Caco-2 (cell line): ENCODE measurements at regions of chr7 and their contacts with region 1.

Region 1: GRCh38 chr7:18829858-18830285 is 287.6 kb downstream of the TWIST1 start:
- DNase-seq: no peak
- H3K4me3 ChIP-seq: no peak overlapping the region
- H3K4me3 Mint-ChIP-seq: no peak overlapping the region
- H3K27ac Mint-ChIP-seq: no peak overlapping the region
- H3K4me1 ChIP-seq: no peaks in the 10 kb centered on the region
- H3K4me1 Mint-ChIP-seq: no peaks in the 10 kb centered on the region
- H3K27me3 ChIP-seq: no peaks in the 10 kb centered on the region
- H3K27me3 Mint-ChIP-seq: no peaks in the 10 kb centered on the region
- CTCF ChIP-seq: no peak

Region 2: DNA sequence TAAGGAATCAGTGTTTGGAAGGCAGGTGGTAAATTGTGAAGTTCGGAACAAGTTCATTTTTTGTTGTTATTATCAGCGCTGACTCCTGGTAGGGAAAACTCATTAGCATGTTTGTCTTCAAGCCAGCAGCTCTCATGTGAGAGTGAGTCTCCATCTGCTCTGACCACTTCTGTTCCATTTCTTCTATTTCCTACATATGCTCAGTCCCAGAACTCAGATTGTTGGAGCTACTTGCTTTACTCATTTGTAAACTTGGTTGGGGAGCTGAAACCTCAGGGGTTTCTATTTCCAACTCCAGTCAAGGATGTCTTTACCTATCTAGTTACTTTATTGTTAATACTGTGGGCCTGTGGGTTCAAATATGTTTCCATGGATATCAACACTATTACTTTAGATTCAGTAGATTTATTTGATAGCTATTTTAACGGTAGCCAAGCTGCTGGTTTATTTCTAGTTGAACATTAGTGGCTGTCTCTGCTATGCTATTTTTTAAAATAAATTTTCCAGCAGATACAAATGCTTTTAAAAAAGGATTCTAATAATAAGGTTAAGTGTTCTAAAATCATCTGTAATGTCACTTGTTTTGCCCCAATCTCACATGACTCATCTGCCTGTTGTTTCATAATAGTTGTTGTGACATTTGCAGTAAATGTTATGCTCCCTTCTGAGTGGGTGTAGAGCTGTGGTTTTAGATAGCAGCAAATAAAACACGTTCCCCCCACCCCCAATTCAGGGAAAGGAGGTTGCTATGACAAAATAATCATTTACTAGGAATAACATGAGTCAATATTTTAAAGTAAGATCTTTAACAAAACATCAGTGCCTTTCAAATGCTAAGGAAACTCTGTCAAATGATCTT is 191.0 kb before region 1 on chr7:
- CTCF ChIA-PET with region 1: no interaction called
- POLR2A ChIA-PET with region 1: no interaction called
- intact Hi-C with region 1: no loop called
- DNase-seq: no peak
- H3K4me3 ChIP-seq: no peak overlapping the region
- H3K4me3 Mint-ChIP-seq: no peak overlapping the region
- H3K27ac Mint-ChIP-seq: no peak overlapping the region
- H3K4me1 ChIP-seq: no peaks in the 10 kb centered on the region
- H3K4me1 Mint-ChIP-seq: no peaks in the 10 kb centered on the region
- H3K27me3 ChIP-seq: no peaks in the 10 kb centered on the region
- H3K27me3 Mint-ChIP-seq: no peaks in the 10 kb centered on the region
- CTCF ChIP-seq: no peak

Region 3: GRCh38 chr7:18770154-18770811 is 59.6 kb before region 1 on chr7:
- CTCF ChIA-PET with region 1: no interaction called
- POLR2A ChIA-PET with region 1: no interaction called
- intact Hi-C with region 1: loop called (anchors 10 kb)
- DNase-seq: no peak
- H3K4me3 ChIP-seq: no peak overlapping the region
- H3K4me3 Mint-ChIP-seq: no peak overlapping the region
- H3K27ac Mint-ChIP-seq: no peak overlapping the region
- H3K4me1 ChIP-seq: no peaks in the 10 kb centered on the region
- H3K4me1 Mint-ChIP-seq: no peaks in the 10 kb centered on the region
- H3K27me3 ChIP-seq: no peaks in the 10 kb centered on the region
- H3K27me3 Mint-ChIP-seq: no peaks in the 10 kb centered on the region
- CTCF ChIP-seq: no peak